ENCODE measurements at regions of chr7 and their contacts with region 1.

Region 1: GRCh38 chr7:105934572-105935185 is 28.4 kb upstream of the CDHR3 start:
- DNase-seq: peak; percentile 47
- H3K4me3 Mint-ChIP-seq: no peak overlapping the region
- H3K27ac Mint-ChIP-seq: no peak overlapping the region
- H3K4me1 Mint-ChIP-seq: peaks cover 9% of the 10 kb centered on the region
- H3K27me3 Mint-ChIP-seq: no peaks in the 10 kb centered on the region
- CTCF ChIP-seq: peak; percentile 24

Region 2: GRCh38 chr7:106050011-106050745 is 115.5 kb after region 1 on chr7:
- CTCF ChIA-PET with region 1: interaction called, 13 read pairs
- POLR2A ChIA-PET with region 1: no interaction called
- intact Hi-C with region 1: no loop called
- DNase-seq: peak; percentile 85
- H3K4me3 Mint-ChIP-seq: no peak overlapping the region
- H3K27ac Mint-ChIP-seq: no peak overlapping the region
- H3K4me1 Mint-ChIP-seq: peaks cover 20% of the 10 kb centered on the region
- H3K27me3 Mint-ChIP-seq: peaks cover 15% of the 10 kb centered on the region
- CTCF ChIP-seq: no peak